T-cell (primary cell): ENCODE measurements at regions of chr17 and their contacts with region 1.

Region 1: DNA sequence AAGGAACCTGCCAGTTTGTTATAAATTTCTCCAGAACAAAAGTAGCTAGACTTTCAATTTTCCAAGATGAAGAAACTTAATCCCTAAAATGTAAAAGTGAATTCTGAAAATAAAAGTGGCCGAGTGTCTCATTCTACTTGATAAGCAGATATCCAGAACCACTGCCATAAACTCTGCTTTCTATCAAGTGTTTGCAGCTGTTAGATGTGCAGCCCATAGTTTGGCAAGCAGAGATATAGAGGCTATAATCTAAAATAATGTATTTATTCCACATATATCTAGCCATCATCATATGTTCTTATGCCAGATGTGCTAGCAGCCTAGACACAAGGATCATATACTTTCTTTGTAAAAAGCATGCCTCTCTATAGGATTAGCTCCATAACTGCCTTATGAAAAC is 14.7 kb upstream of the FBXL20 start:
- DNase-seq: no peak
- ATAC-seq: no peak
- H3K4me3 ChIP-seq: no peak overlapping the region
- H3K4me3 Mint-ChIP-seq: no peak overlapping the region
- H3K27ac ChIP-seq: no peak overlapping the region
- H3K27ac Mint-ChIP-seq: no peak overlapping the region
- H3K4me1 ChIP-seq: no peaks in the 10 kb centered on the region
- H3K4me1 Mint-ChIP-seq: no peaks in the 10 kb centered on the region
- H3K27me3 ChIP-seq: no peaks in the 10 kb centered on the region
- H3K27me3 Mint-ChIP-seq: no peaks in the 10 kb centered on the region

Region 2: DNA sequence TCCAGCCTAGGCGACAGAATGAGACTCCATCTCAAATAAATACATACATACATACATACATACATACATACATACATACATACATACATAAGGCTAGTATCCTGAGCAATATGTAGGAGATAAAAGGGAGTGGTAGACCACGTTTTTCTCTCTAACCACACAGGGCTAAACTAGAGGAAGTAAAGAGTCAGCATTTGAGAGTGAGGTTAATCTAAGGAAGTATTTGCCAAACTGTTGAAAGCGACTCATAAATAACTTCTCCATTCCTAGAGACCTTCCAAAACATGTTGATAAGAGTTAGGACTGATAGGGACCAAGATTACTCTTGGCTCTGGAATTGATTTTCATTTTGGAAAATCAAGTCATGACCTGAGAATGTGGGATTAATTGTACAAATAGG is 122.7 kb after region 1 on chr17:
- CTCF ChIA-PET with region 1: interaction called in 1 of 2 experiments, 18 read pairs
- POLR2A ChIA-PET with region 1: no interaction called
- DNase-seq: peak in 1 of 35 experiments; percentile 13
- ATAC-seq: peak; percentile 54 to 70 (median 66)
- H3K4me3 ChIP-seq: no peak overlapping the region
- H3K4me3 Mint-ChIP-seq: no peak overlapping the region
- H3K27ac ChIP-seq: no peak overlapping the region
- H3K27ac Mint-ChIP-seq: no peak overlapping the region
- H3K4me1 ChIP-seq: peaks cover 0 to 5% of the 10 kb centered on the region in 2 experiments
- H3K4me1 Mint-ChIP-seq: peaks cover 18 to 23% (median 19%) of the 10 kb centered on the region in 3 donors
- H3K27me3 ChIP-seq: no peaks in the 10 kb centered on the region
- H3K27me3 Mint-ChIP-seq: no peaks in the 10 kb centered on the region

Region 3: DNA sequence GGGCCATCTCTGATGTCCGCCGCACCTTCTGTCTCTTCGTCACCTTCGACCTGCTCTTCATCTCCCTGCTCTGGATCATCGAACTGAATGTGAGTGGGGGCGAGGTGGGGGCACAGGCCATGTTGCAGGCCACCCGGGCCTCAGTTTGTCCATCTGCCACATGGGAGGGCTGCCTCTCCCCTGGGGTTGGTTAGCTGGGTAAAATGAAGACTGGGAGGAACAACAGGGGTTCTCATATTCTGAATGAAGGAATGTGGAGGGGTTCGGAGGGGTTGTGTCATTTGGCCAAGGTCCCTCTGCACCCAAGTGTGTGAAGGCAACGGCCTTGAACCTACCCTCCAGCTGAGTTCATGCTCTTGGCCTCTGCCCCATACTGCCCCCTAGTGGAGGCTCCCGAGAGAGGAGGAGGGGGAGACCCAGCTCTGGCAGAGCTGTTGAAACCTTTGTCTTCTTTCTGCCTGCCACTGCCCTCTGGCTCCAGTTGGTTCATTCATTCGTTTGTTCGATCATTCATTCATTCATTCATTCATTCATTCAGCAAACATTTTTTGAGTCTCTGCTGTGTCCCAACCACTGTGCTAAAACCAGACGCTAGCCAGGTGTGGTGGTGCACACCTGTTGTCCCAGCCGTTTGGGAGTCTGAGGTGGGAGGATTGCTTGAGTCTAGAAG is 237.7 kb after region 1 on chr17:
- CTCF ChIA-PET with region 1: no interaction called
- POLR2A ChIA-PET with region 1: interaction called in 1 of 2 experiments, 10 read pairs
- DNase-seq: peak; percentile 40 to 85 (median 75)
- ATAC-seq: peak; percentile 61 to 74 (median 66)
- H3K4me3 ChIP-seq: no peak overlapping the region
- H3K4me3 Mint-ChIP-seq: no peak overlapping the region
- H3K27ac ChIP-seq: no peak overlapping the region
- H3K27ac Mint-ChIP-seq: peak overlapping the region in 1 of 2 donors; percentile 34
- H3K4me1 ChIP-seq: peaks cover 5 to 45% of the 10 kb centered on the region in 2 experiments
- H3K4me1 Mint-ChIP-seq: peaks cover 53 to 67% (median 61%) of the 10 kb centered on the region in 3 donors
- H3K27me3 ChIP-seq: no peaks in the 10 kb centered on the region
- H3K27me3 Mint-ChIP-seq: no peaks in the 10 kb centered on the region